Esophagus muscularis mucosa (tissue), 4 donors: ENCODE measurements at regions of chr22 and their contacts with region 1.

Region 1: GRCh38 chr22:30289134-30289979 is at the start of gene CASTOR1:
- DNase-seq: peak; percentile 100
- H3K4me3 ChIP-seq: peak within 1 kb of the TSS; percentile 76 to 99 (median 92)
- H3K27ac ChIP-seq: peak within 1 kb of the TSS; percentile 94 to 99 (median 98)
- H3K4me1 ChIP-seq: peaks cover 41 to 52% (median 50%) of the 10 kb centered on the region in 4 donors
- H3K27me3 ChIP-seq: no peaks in the 10 kb centered on the region
- CTCF ChIP-seq: peak in 1 of 3 experiments; percentile 6
- EP300 ChIP-seq: no peak
- POLR2A ChIP-seq: peak; percentile 65
- total RNA-seq, gene CASTOR1: 16.5 to 19.4 (median 17.8) TPM

Region 2: DNA sequence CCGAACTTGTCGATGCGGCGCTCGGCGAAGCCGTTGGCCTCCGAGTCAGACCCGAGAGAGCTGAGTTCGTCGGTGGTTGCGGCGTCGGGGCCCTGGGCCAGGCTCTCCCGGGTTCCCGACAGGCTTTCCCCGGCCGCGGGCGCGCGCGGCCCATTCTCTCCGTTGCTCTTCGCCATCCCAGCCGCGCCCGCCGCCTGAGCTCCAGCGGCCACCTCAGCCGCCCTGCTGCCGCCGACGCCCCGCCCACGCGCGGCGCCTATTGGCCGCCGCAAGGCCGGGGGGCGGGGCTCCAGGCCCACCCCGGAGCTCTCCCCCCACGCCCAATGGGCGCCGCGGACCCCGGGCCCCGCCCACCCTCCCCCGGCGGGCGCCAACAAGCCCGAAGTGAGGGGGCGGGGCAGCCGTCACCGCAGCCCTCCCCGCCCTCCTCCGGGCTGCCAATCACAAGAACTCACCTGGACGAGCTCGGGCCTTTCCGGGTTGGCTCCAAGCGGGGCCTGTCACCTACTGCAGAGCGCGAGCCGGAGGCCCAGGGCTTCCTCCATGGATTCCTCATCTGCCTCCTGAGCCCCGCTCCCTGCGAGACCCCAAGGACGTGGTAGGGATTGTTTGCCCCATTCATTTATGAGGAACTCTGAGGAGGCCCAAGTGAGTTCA is 37.5 kb after region 1 on chr22 and contains the start of gene TBC1D10A:
- intact Hi-C with region 1: loop called (anchors 2 kb)
- DNase-seq: peak; percentile 96
- H3K4me3 ChIP-seq: peak within 1 kb of the TSS; percentile 98 to 100 (median 99)
- H3K27ac ChIP-seq: peak within 1 kb of the TSS; percentile 93 to 95 (median 94)
- H3K4me1 ChIP-seq: peaks cover 43 to 53% (median 51%) of the 10 kb centered on the region in 4 donors
- H3K27me3 ChIP-seq: no peaks in the 10 kb centered on the region
- CTCF ChIP-seq: no peak
- EP300 ChIP-seq: no peak
- POLR2A ChIP-seq: peak; percentile 79
- total RNA-seq, gene TBC1D10A: 29.5 to 40.3 (median 38.0) TPM

Region 3: GRCh38 chr22:30357650-30358215 is 68.4 kb after region 1 on chr22:
- intact Hi-C with region 1: loop called (anchors 2 kb)
- DNase-seq: no peak
- H3K4me3 ChIP-seq: peak overlapping the region; percentile 75 to 82 (median 81)
- H3K27ac ChIP-seq: no peak overlapping the region
- H3K4me1 ChIP-seq: peaks cover 30 to 45% (median 43%) of the 10 kb centered on the region in 4 donors
- H3K27me3 ChIP-seq: no peaks in the 10 kb centered on the region
- CTCF ChIP-seq: no peak
- EP300 ChIP-seq: no peak
- POLR2A ChIP-seq: no peak